ENCODE measurements at regions of chr18 and their contacts with region 1.

Region 1: GRCh38 chr18:63439334-63439733 is 17.1 kb upstream of the VPS4B start:
- DNase-seq: peak; percentile 79

Region 2: GRCh38 chr18:63016270-63016669 is 423.1 kb before region 1 on chr18:
- in situ Hi-C with region 1: loop called (anchors 25 kb)
- DNase-seq: peak; percentile 82

Measured in KBM-7 (cell line).